ENCODE measurements at regions of chr22 and their contacts with region 1.

Region 1: GRCh38 chr22:30005213-30005857 is 74.9 kb upstream of the HORMAD2 start:
- DNase-seq: peak in 9 of 10 donors; percentile 37 to 95 (median 78)

Region 2: DNA sequence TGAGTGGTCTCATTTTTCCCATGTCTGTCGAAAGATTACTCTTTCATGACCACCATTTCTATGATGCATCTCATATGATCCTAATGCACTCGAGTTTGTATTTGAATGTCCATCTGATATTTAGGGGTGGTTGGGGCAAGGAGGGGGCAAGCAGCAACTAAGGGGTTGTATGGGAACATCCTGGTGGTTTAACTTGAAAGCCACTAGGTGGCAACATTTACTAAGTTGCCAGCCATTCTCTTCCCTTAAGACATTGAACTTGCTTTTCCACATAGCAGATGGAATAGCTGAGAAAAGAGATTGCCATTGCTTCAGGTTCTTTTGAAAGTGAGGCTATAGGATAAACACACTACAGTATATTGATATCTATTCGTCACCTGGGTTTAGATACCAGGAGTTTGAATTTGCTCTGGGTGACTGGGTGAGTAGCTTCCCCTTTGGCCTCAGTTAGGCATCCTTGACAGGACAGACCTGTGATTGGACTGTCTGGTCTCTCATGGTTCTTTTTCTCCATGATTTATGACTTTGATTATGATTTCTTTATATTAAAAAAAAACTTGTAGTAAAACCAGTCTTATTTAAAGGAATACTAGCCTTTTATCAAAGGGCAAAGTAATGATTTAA is 369.5 kb before region 1 on chr22:
- intact Hi-C with region 1: loop called (anchors 10 kb)
- DNase-seq: no peak

Region 3: DNA sequence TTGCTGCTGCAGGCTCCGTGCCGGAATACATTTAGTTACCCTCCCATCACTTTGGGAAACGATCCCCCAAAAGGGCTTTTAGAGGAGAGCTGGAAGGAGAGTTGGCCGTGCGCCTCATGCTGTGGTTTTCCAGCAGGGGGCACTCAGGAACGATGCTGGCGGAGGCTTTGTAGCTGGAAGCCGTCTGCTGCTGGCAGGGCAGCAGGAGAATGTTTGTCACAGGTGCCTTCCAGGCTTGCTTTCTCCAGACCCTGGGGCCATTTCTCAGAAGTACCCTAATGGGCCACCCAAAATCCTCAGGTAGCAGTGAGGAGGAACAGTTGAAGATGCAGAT is 315.5 kb before region 1 on chr22:
- intact Hi-C with region 1: loop called (anchors 10 kb)
- DNase-seq: peak; percentile 74 to 97 (median 84)

Region 4: GRCh38 chr22:29780748-29781676 is 224.3 kb before region 1 on chr22:
- intact Hi-C with region 1: loop called (anchors 10 kb)
- DNase-seq: peak in 6 of 10 donors; percentile 31 to 92 (median 74)

Region 5: DNA sequence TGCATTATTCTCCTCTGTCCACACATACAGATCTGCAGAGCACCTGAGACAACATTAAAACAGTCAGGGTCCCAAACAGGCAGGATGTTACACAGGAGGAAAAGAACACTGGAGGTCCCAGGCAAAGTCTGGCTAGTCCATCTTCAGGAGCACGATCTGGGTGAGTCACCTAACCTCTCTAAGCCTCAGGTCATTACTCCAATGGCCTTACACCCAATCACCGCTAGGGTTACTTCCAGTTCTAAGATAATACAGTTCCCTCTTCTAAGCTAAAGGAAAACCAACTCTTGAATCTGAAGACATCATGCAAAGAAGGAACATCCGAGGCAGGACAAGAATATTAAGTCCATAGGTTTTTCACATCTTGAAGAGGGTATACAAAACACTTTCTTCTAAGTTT is 191.8 kb before region 1 on chr22:
- intact Hi-C with region 1: loop called (anchors 10 kb)
- DNase-seq: no peak

Region 6: GRCh38 chr22:29947410-29948384 is 57.6 kb before region 1 on chr22:
- intact Hi-C with region 1: no loop called
- DNase-seq: no peak

Region 7: GRCh38 chr22:30079952-30080533 is 74.7 kb after region 1 on chr22 and contains the start of gene HORMAD2:
- intact Hi-C with region 1: loop called (anchors 10 kb)
- DNase-seq: peak in 8 of 10 donors; percentile 9 to 89 (median 31)

Measured in posterior cingulate gyrus (tissue), 11 donors.